Common myeloid progenitor, CD34-positive (primary cell): ENCODE measurements at regions of chr2 and their contacts with region 1.

Region 1: DNA sequence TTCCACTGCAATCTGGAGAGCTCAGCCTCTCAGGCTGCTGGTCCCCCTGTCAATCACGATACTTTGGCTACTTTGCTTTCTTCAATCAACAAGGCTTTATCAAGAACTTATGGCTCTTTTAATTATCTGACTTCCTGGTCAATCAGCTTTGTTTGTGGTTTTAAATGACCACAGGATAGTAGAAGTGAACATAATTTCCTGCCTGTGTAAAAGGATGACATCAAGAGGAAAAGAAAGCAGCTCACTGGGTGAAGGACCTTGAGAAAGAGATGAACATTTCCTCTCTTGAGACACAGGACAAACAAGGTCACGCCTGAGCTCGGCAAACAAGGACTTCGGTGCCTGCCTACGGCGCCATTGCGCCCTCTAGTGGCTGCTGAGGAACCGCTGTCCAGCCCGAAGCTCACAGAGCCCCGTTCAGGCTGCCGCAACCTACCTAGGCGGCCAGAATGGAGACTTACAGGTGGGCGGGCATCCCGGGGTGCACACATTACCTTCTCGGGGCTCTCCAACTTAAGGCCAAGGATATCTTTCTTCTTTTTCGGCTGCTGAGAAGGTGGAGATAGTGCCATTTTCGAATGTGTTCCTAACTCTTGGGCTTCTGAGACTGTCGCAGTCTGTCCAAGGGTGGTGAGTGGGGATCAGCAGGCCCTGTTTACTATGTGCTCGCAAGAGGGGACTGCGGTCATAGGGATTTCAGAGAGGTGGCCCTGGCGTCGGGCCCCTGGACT is 54.0 kb downstream of the IL1RL2 start:
- DNase-seq: peak; percentile 84 to 92 (median 88)
- H3K4me3 ChIP-seq: no peak overlapping the region
- H3K27ac ChIP-seq: no peak overlapping the region
- H3K4me1 ChIP-seq: peaks cover 0 to 2% (median 0%) of the 10 kb centered on the region in 4 experiments
- H3K27me3 ChIP-seq: no peaks in the 10 kb centered on the region

Region 2: DNA sequence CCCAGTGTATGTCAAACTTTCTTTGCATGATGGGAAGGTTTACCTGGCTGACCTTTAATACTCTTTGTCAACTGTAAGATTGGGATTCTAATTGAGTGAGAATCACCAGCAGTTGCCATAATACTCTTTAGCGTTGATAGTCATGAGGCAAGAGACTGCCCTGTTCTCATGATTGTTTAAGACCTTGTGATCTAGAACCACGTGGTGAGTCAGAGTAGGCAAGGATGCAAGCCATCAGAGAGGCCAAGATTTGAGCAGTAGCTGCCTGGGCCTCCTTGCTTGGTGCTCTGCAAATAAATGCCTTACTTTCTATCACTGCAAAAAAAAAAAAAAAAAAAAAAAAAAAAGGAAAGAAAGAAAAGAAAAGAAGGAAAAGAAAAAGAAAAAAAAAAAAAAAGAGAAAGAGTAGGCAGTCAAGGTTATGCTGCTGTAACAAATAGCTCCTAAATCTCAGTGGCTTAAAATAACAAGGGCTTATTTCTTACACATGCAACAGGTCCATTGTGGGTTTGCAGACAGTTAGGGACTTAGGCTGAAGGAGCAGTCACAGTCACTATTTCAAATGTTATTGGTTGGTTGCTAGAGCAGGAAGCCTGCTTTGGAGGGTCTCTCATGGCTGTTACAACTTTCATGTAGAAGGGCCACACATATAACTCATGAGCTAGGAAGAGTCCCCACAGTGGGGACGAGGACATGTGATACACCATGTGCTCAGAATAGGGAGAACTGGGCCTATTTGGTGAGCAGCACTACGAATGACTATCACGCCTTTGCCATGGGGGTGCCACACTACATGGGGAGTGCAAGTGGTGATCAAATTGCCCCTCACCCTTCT is 227.4 kb before region 1 on chr2:
- CTCF ChIA-PET with region 1: interaction called, 66 read pairs
- POLR2A ChIA-PET with region 1: no interaction called
- DNase-seq: peak in 1 of 3 donors; percentile 33
- H3K4me3 ChIP-seq: no peak overlapping the region
- H3K27ac ChIP-seq: no peak overlapping the region
- H3K4me1 ChIP-seq: peaks cover 0 to 15% (median 11%) of the 10 kb centered on the region in 4 experiments
- H3K27me3 ChIP-seq: no peaks in the 10 kb centered on the region

Region 3: DNA sequence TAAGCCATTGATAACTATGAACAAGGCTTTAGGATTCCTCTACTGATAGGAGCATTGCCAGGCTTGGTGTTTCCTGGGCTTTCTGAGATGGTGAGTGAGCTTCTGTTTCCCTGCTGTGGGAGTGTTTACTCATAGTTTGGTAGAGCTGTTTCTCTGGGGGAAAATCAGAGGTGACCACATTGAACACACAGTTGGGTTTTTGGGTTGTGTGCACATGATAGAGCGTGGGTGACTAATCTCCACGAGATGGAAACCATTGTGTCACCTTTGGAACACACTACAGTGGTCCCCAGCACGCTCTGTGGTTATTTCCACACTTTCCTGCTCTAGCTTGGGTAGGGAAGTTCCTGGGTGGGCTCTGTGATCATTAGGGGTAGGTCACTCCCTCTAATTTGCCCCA is 92.9 kb before region 1 on chr2:
- CTCF ChIA-PET with region 1: no interaction called
- POLR2A ChIA-PET with region 1: no interaction called
- DNase-seq: peak in 1 of 3 donors; percentile 7
- H3K4me3 ChIP-seq: no peak overlapping the region
- H3K27ac ChIP-seq: no peak overlapping the region
- H3K4me1 ChIP-seq: peaks cover under 1 to 4% (median 3%) of the 10 kb centered on the region in 4 experiments
- H3K27me3 ChIP-seq: peaks cover 0 to 13% (median 3%) of the 10 kb centered on the region in 5 experiments

Region 4: GRCh38 chr2:102166189-102166845 is 74.5 kb before region 1 on chr2:
- CTCF ChIA-PET with region 1: interaction called, 17 read pairs
- POLR2A ChIA-PET with region 1: no interaction called
- DNase-seq: peak; percentile 29 to 57 (median 52)
- H3K4me3 ChIP-seq: no peak overlapping the region
- H3K27ac ChIP-seq: no peak overlapping the region
- H3K4me1 ChIP-seq: no peaks in the 10 kb centered on the region
- H3K27me3 ChIP-seq: no peaks in the 10 kb centered on the region

Region 5: GRCh38 chr2:102200539-102200938 is 40.3 kb before region 1 on chr2:
- CTCF ChIA-PET with region 1: interaction called, 11 read pairs
- POLR2A ChIA-PET with region 1: no interaction called
- DNase-seq: no peak
- H3K4me3 ChIP-seq: no peak overlapping the region
- H3K27ac ChIP-seq: no peak overlapping the region
- H3K4me1 ChIP-seq: no peaks in the 10 kb centered on the region
- H3K27me3 ChIP-seq: no peaks in the 10 kb centered on the region

Region 6: GRCh38 chr2:102251042-102251848 is 10.4 kb after region 1 on chr2:
- CTCF ChIA-PET with region 1: interaction called, 54 read pairs
- POLR2A ChIA-PET with region 1: no interaction called
- DNase-seq: peak; percentile 67 to 76 (median 72)
- H3K4me3 ChIP-seq: peak overlapping the region; percentile 4 to 79 (median 64)
- H3K27ac ChIP-seq: no peak overlapping the region
- H3K4me1 ChIP-seq: peaks cover 0 to 9% (median 6%) of the 10 kb centered on the region in 4 experiments
- H3K27me3 ChIP-seq: peaks cover 0 to 8% (median 0%) of the 10 kb centered on the region in 5 experiments

Region 7: GRCh38 chr2:102442967-102443828 is 202.4 kb after region 1 on chr2:
- CTCF ChIA-PET with region 1: interaction called, 33 read pairs
- POLR2A ChIA-PET with region 1: interaction called, 3 read pairs
- DNase-seq: peak; percentile 53 to 69 (median 59)
- H3K4me3 ChIP-seq: peak overlapping the region in 1 of 7 experiments; percentile 49
- H3K27ac ChIP-seq: no peak overlapping the region
- H3K4me1 ChIP-seq: peaks cover 4 to 15% (median 5%) of the 10 kb centered on the region in 4 experiments
- H3K27me3 ChIP-seq: no peaks in the 10 kb centered on the region